ENCODE measurements at regions of chr6 and their contacts with region 1.

Region 1: GRCh38 chr6:132512638-132513632 is at the start of gene STX7:
- DNase-seq: peak; percentile 85 to 89 (median 87)
- H3K4me3 ChIP-seq: peak within 1 kb of the TSS; percentile 36 to 63
- H3K4me3 Mint-ChIP-seq: peak within 1 kb of the TSS; percentile 98 to 99 (median 98)
- H3K27ac ChIP-seq: peak within 1 kb of the TSS; percentile 54
- H3K27ac Mint-ChIP-seq: peak within 1 kb of the TSS; percentile 47 to 97 (median 92)
- H3K4me1 ChIP-seq: peaks cover 23% of the 10 kb centered on the region
- H3K4me1 Mint-ChIP-seq: peaks cover 23 to 40% (median 30%) of the 10 kb centered on the region in 4 donors
- H3K27me3 ChIP-seq: no peaks in the 10 kb centered on the region
- H3K27me3 Mint-ChIP-seq: no peaks in the 10 kb centered on the region
- total RNA-seq, gene STX7: 22.7 TPM

Region 2: DNA sequence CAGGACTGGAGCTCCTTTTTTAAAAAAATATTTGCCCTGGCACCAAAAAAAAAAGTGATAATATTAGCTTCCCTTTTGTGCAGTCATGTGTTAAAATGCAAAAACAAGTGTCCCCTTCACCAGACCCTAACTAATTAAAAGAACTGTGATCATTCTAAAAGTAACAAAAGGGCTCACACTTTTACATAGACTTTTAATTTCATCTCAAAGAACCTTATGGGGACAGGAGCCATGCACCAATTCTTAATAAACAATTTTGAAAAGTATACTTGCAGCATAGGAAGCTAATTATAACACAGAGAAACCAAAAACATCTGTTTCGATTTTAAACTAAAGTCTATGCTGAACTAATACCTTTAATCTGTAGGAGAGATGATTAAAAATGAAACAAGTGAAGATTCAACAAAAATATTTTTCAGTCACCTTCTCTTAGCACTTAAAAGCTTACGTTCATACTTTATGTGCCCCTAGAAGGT is 17.3 kb before region 1 on chr6:
- CTCF ChIA-PET with region 1: no interaction called
- POLR2A ChIA-PET with region 1: interaction called, 3 read pairs
- intact Hi-C with region 1: loop called (anchors 2 kb)
- DNase-seq: no peak
- H3K4me3 ChIP-seq: no peak overlapping the region
- H3K4me3 Mint-ChIP-seq: peak overlapping the region in 1 of 8 donors; percentile 59
- H3K27ac ChIP-seq: no peak overlapping the region
- H3K27ac Mint-ChIP-seq: peak overlapping the region in 2 of 7 donors; percentile 7 to 52
- H3K4me1 ChIP-seq: peaks cover 35% of the 10 kb centered on the region
- H3K4me1 Mint-ChIP-seq: peaks cover 26 to 49% (median 46%) of the 10 kb centered on the region in 4 donors
- H3K27me3 ChIP-seq: no peaks in the 10 kb centered on the region
- H3K27me3 Mint-ChIP-seq: no peaks in the 10 kb centered on the region

Measured in CD4-positive, alpha-beta memory T cell (primary cell).